ENCODE measurements at regions of chr16 and their contacts with region 1.

Region 1: DNA sequence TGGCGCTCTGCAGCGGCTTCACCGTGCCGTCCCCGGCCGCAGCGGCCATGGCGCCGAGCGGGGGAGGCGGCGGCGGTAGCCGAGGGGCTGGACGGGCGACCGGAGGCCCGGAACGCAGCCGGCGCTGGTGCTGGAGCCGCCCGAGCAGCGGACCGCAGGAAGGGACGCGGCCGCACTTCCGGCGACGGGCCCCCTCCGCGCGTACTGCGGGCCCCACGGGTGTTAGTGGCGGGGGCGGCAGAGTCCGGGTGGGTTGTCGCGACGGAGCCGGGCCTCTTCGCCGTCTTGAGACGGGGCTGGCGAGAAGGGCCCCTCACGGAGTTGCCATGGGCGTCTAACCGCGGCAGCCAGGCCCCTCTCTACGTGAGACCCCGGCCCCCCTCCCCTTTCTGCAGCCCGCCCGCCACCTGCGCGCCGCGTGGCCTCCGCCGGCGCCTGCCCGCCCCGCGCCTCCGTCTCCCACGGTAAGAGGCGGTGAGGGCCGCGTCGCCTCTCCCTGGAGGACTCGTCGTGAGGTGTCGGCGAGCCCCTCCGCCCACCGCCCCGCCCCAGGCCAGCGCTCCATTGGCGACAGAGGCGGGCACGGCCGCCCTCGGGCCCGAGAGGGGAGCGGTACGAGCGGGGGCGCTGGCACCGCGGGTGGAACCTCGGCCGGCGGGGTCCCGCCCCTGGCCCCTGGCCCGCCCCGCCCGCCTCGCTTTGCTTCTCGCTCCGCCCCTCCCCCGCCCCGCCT is at the starts of genes VPS9D1 and ZNF276:
- DNase-seq: peak; percentile 73
- H3K4me3 Mint-ChIP-seq: peak within 1 kb of the TSS; percentile 95
- H3K27ac Mint-ChIP-seq: peak within 1 kb of the TSS; percentile 95
- H3K4me1 Mint-ChIP-seq: peaks cover 32% of the 10 kb centered on the region
- H3K27me3 Mint-ChIP-seq: no peaks in the 10 kb centered on the region
- total RNA-seq, gene VPS9D1: 4.9 and 5.9 TPM in 2 replicates
- total RNA-seq, gene ZNF276: 34.2 and 36.4 TPM in 2 replicates

Region 2: GRCh38 chr16:89241187-89242007 is 479.6 kb before region 1 on chr16:
- intact Hi-C with region 1: loop called (anchors 10 kb)
- DNase-seq: peak; percentile 72
- H3K4me3 Mint-ChIP-seq: peak overlapping the region; percentile 95
- H3K27ac Mint-ChIP-seq: peak overlapping the region; percentile 97
- H3K4me1 Mint-ChIP-seq: peaks cover 5% of the 10 kb centered on the region
- H3K27me3 Mint-ChIP-seq: peaks cover 2% of the 10 kb centered on the region

Region 3: DNA sequence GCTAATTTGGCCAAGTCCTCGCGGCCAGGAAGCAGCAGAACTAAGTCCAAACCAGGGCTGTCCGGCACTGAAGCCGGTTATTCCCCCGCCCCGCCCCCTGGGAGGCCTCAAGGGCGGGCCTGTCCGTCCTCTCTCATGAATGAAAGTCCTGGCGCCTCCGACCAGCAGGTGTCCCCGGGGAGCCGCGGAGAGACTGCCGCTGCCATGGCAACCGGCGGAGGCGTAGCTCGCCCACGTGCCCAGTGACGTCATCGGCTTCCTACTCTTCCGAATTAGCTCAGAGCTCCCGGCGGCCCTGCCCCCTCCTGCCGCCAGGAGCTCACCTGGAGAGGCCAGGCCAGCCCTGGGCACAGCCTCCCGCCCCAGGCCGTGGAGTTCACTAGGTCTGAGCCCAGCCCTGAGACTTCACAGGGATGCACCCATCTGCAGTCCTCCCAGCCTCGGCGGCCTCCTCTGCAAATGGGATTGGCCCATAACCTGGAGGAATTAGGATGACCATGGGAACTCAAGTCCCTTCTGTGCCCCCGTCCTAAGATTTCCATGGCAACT is 20.8 kb before region 1 on chr16:
- intact Hi-C with region 1: loop called (anchors 1 kb)
- DNase-seq: peak; percentile 96
- H3K4me3 Mint-ChIP-seq: peak overlapping the region; percentile 75
- H3K27ac Mint-ChIP-seq: peak overlapping the region; percentile 84
- H3K4me1 Mint-ChIP-seq: peaks cover 6% of the 10 kb centered on the region
- H3K27me3 Mint-ChIP-seq: no peaks in the 10 kb centered on the region

Region 4: DNA sequence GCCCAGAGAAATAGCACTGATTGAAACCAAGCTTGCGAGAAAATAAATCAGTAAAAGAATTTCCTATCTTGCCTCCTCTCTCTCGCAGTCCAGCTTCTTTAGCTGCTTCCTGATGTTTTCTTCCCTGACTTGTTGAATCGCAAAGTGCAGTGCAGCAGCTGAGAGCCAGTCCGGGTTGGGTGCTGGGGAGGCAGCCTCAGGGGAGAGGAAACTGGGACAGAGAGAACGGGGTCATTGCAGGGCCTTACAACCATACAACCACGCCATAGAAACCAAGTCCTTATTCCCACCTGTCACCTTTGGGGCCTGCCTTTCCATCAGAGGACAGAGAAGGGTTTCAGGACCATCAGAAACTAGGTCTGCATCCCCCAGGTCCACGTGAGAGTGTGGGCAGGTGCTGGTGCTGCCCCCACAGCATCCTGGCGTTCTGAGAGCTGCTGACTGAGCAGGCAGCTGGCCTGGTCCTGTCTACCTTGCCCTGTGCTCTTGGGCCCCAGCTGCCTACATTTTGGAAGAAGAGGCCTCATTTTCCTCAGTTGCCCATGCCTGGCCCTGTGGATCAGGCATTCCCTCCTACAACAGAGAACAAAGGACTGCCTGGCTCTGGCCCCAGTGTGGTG is 21.9 kb after region 1 on chr16:
- intact Hi-C with region 1: no loop called
- DNase-seq: no peak
- H3K4me3 Mint-ChIP-seq: no peak overlapping the region
- H3K27ac Mint-ChIP-seq: no peak overlapping the region
- H3K4me1 Mint-ChIP-seq: peaks cover 2% of the 10 kb centered on the region
- H3K27me3 Mint-ChIP-seq: no peaks in the 10 kb centered on the region

Region 5: DNA sequence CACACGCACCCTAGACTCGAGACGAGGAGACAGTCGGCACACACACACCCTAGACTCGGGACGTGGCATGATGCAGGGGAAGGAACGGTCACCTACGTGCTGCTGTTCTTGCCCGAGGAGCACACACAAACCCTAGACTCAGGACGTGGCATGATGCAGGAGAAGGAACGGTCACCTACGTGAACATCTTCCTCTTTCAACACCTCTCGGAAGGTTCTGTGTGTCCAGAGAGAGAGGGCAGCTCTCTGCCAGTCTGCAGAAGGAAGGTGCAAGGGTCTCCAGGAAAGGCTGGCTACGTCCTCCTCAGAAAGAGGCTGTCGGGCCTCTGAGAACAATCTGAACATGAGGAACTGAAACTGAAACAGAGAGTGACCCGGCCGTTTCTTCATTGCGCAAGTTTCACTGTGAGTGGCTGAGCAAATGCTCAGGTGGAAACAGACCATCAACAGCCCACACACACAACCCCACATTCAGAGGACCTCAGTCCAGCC is 43.8 kb after region 1 on chr16:
- intact Hi-C with region 1: no loop called
- DNase-seq: peak; percentile 6
- H3K4me3 Mint-ChIP-seq: peak overlapping the region; percentile 60
- H3K27ac Mint-ChIP-seq: peak overlapping the region; percentile 57
- H3K4me1 Mint-ChIP-seq: peaks cover 37% of the 10 kb centered on the region
- H3K27me3 Mint-ChIP-seq: no peaks in the 10 kb centered on the region

Region 6: GRCh38 chr16:89815639-89816348 is 94.8 kb after region 1 on chr16:
- intact Hi-C with region 1: loop called (anchors 1 kb)
- DNase-seq: no peak
- H3K4me3 Mint-ChIP-seq: peak overlapping the region; percentile 86
- H3K27ac Mint-ChIP-seq: peak overlapping the region; percentile 58
- H3K4me1 Mint-ChIP-seq: peaks cover 26% of the 10 kb centered on the region
- H3K27me3 Mint-ChIP-seq: no peaks in the 10 kb centered on the region

Region 7: GRCh38 chr16:89837305-89837554 is 116.3 kb after region 1 on chr16:
- intact Hi-C with region 1: no loop called
- DNase-seq: no peak
- H3K4me3 Mint-ChIP-seq: no peak overlapping the region
- H3K27ac Mint-ChIP-seq: no peak overlapping the region
- H3K4me1 Mint-ChIP-seq: peaks cover 10% of the 10 kb centered on the region
- H3K27me3 Mint-ChIP-seq: no peaks in the 10 kb centered on the region

Region 8: GRCh38 chr16:89860747-89861304 is 139.8 kb after region 1 on chr16:
- intact Hi-C with region 1: loop called (anchors 1 kb)
- DNase-seq: peak; percentile 71
- H3K4me3 Mint-ChIP-seq: no peak overlapping the region
- H3K27ac Mint-ChIP-seq: no peak overlapping the region
- H3K4me1 Mint-ChIP-seq: peaks cover 33% of the 10 kb centered on the region
- H3K27me3 Mint-ChIP-seq: no peaks in the 10 kb centered on the region

Region 9: DNA sequence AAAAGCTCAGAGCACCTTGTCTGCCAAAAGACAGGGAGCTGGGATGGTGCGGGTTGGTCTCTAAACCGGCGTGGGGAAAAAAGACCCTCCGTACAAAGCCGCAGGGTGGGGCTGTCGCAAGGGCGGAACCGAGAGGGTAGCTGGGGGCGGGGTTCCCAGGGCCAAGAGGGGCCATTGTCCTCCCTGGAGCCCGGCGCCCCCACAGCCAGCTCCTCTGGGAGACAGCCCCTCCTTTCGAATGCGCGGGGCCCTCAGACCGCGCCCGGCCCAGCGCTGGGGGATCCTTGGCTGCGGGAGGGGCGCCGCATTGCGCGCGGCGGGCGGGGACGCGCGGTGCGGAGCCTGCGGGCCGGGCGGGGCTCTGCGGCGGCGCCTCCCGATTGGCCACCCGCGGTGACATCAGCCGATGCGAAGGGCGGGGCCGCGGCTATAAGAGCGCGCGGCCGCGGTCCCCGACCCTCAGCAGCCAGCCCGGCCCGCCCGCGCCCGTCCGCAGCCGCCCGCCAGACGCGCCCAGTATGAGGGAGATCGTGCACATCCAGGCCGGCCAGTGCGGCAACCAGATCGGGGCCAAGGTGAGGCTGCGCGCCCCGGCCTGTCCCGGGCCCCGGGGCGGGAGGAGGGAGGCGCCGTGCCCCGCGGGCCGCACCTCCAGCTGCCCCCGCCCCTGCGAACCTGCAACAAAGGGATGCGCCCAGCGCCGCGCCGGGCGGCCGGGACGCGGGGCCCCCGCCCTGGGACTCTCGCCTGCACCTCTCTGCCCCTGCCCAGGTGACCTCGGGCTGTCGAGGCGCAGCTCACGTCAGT is 202.1 kb after region 1 on chr16 and contains the start of gene TUBB3:
- intact Hi-C with region 1: loop called (anchors 5 kb)
- DNase-seq: peak; percentile 69
- H3K4me3 Mint-ChIP-seq: peak within 1 kb of the TSS; percentile 83
- H3K27ac Mint-ChIP-seq: peak within 1 kb of the TSS; percentile 15
- H3K4me1 Mint-ChIP-seq: peaks cover 7% of the 10 kb centered on the region
- H3K27me3 Mint-ChIP-seq: peaks cover 29% of the 10 kb centered on the region
- total RNA-seq, gene TUBB3: 2.0 and 2.6 TPM in 2 replicates